H1 (cell line): ENCODE measurements at regions of chr10 and their contacts with region 1.

Region 1: DNA sequence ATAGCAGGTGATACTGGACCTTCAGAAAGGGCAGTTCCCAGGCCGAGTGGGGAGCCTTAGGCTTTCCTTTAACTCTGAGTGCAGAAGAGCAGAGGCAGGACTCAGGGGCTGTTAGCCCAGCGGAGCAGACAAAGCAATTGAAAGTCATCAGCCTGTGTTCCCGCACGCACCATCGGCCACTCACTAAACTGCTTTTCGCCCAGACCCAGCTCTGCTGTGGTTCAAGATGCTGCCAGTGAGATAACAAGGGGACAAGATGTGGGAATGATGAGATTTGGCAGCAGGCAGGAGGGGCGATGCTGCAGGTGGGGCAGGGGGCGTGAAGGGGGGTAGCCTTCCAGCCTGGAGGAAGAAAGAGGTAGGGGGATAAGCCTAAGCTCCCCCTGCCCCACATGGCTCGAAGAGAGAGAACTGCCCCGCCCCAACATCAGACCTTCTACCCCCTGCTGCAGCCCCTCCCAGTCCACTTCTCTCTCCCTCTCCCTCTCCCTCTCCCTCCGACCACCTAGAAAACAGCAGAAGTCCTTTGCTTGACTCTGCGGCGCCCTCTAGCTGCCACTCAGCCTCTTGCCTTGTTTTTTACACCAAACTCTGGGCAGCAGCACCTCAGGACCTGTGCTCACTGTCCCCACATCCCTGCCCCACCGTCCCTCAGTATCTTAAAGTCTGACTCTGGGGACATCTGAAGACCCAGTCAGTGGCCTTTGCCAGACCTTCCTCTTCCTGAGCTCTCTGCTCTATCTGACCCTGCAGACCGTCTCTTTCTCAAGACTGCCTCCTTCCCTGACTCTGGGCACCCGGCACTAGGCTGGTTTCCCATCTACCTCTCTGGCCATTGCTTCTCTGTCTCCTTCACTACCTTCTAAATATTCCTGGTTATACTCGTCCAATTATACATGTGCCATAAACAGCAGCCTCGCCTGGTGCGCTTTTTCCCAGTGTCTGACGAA is 110.5 kb downstream of the C10orf105 start:
- DNase-seq: peak; percentile 67 to 92
- H3K4me3 ChIP-seq: no peak overlapping the region
- H3K27ac ChIP-seq: no peak overlapping the region
- H3K4me1 ChIP-seq: peaks cover 6 to 18% (median 17%) of the 10 kb centered on the region in 4 experiments
- H3K27me3 ChIP-seq: no peaks in the 10 kb centered on the region
- CTCF ChIP-seq: peak; percentile 85 to 95 (median 91)
- EP300 ChIP-seq: no peak
- POLR2A ChIP-seq: no peak
- RAD21 ChIP-seq: peak; percentile 85 to 90

Region 2: GRCh38 chr10:71319042-71319799 is 289.9 kb before region 1 on chr10 and contains the start of gene SLC29A3:
- CTCF ChIA-PET with region 1: interaction called, 10 read pairs
- POLR2A ChIA-PET with region 1: no interaction called
- DNase-seq: peak; percentile 44 to 87
- H3K4me3 ChIP-seq: peak within 1 kb of the TSS; percentile 45 to 87 (median 68)
- H3K27ac ChIP-seq: peak within 1 kb of the TSS; percentile 11; the same call in 1 of the 2 replicates
- H3K4me1 ChIP-seq: peaks cover 2 to 10% (median 3%) of the 10 kb centered on the region in 4 experiments; a peak in 4 of 7 replicates
- H3K27me3 ChIP-seq: no peaks in the 10 kb centered on the region
- CTCF ChIP-seq: peak; percentile 76 to 89 (median 88)
- EP300 ChIP-seq: no peak
- POLR2A ChIP-seq: peak in 1 of 2 experiments; percentile 74; a peak in 2 of 3 replicates
- RAD21 ChIP-seq: peak; percentile 76 to 85
- total RNA-seq, gene SLC29A3: 14.0 and 15.2 TPM in 2 replicates

Region 3: GRCh38 chr10:71486484-71487114 is 122.5 kb before region 1 on chr10:
- CTCF ChIA-PET with region 1: interaction called, 40 read pairs
- POLR2A ChIA-PET with region 1: no interaction called
- DNase-seq: peak in 1 of 2 experiments; percentile 93
- H3K4me3 ChIP-seq: no peak overlapping the region
- H3K27ac ChIP-seq: no peak overlapping the region
- H3K4me1 ChIP-seq: peaks cover 0 to 6% (median 1%) of the 10 kb centered on the region in 4 experiments; a peak in 3 of 7 replicates
- H3K27me3 ChIP-seq: no peaks in the 10 kb centered on the region
- CTCF ChIP-seq: peak; percentile 92 to 99 (median 96)
- EP300 ChIP-seq: no peak
- POLR2A ChIP-seq: no peak
- RAD21 ChIP-seq: peak; percentile 92 to 94

Region 4: GRCh38 chr10:71547876-71548846 is 60.9 kb before region 1 on chr10:
- CTCF ChIA-PET with region 1: interaction called, 12 read pairs
- POLR2A ChIA-PET with region 1: no interaction called
- DNase-seq: peak in 1 of 2 experiments; percentile 75
- H3K4me3 ChIP-seq: no peak overlapping the region
- H3K27ac ChIP-seq: no peak overlapping the region
- H3K4me1 ChIP-seq: peaks cover 2 to 33% (median 17%) of the 10 kb centered on the region in 4 experiments
- H3K27me3 ChIP-seq: no peaks in the 10 kb centered on the region
- CTCF ChIP-seq: peak; percentile 57 to 71 (median 65)
- EP300 ChIP-seq: no peak
- POLR2A ChIP-seq: no peak
- RAD21 ChIP-seq: peak; percentile 26 to 51; a peak in 3 of 4 replicates

Region 5: GRCh38 chr10:71623098-71623985 is 14.2 kb after region 1 on chr10:
- CTCF ChIA-PET with region 1: interaction called, 169 read pairs
- POLR2A ChIA-PET with region 1: interaction called, 3 read pairs
- DNase-seq: no peak
- H3K4me3 ChIP-seq: peak overlapping the region in 1 of 4 experiments; percentile 33; a peak in 1 of 8 replicates
- H3K27ac ChIP-seq: no peak overlapping the region
- H3K4me1 ChIP-seq: peaks cover 25 to 52% (median 35%) of the 10 kb centered on the region in 4 experiments
- H3K27me3 ChIP-seq: no peaks in the 10 kb centered on the region
- CTCF ChIP-seq: peak in 2 of 3 experiments; percentile 6 to 46; a peak in 2 of 4 replicates
- EP300 ChIP-seq: no peak
- POLR2A ChIP-seq: no peak
- RAD21 ChIP-seq: peak; percentile 28 to 43; a peak in 3 of 4 replicates

Region 6: GRCh38 chr10:71696628-71697326 is 87.7 kb after region 1 on chr10:
- CTCF ChIA-PET with region 1: interaction called, 71 read pairs
- POLR2A ChIA-PET with region 1: no interaction called
- DNase-seq: peak; percentile 41 to 95
- H3K4me3 ChIP-seq: no peak overlapping the region
- H3K27ac ChIP-seq: no peak overlapping the region
- H3K4me1 ChIP-seq: no peaks in the 10 kb centered on the region; a peak in 1 of 7 replicates
- H3K27me3 ChIP-seq: no peaks in the 10 kb centered on the region
- CTCF ChIP-seq: peak; percentile 94 to 95 (median 95)
- EP300 ChIP-seq: no peak
- POLR2A ChIP-seq: no peak
- RAD21 ChIP-seq: peak; percentile 81 to 87

Region 7: GRCh38 chr10:71933651-71934050 is 324.6 kb after region 1 on chr10:
- CTCF ChIA-PET with region 1: no interaction called
- POLR2A ChIA-PET with region 1: no interaction called
- DNase-seq: no peak
- H3K4me3 ChIP-seq: no peak overlapping the region
- H3K27ac ChIP-seq: no peak overlapping the region
- H3K4me1 ChIP-seq: no peaks in the 10 kb centered on the region
- H3K27me3 ChIP-seq: no peaks in the 10 kb centered on the region; a peak in 1 of 7 replicates
- CTCF ChIP-seq: no peak
- EP300 ChIP-seq: no peak
- POLR2A ChIP-seq: no peak
- RAD21 ChIP-seq: no peak